ENCODE measurements at regions of chr4 and their contacts with region 1.

Region 1: GRCh38 chr4:38905652-38906385 is 38.2 kb downstream of the FAM114A1 start:
- DNase-seq: no peak
- ATAC-seq: peak; percentile 75

Region 2: DNA sequence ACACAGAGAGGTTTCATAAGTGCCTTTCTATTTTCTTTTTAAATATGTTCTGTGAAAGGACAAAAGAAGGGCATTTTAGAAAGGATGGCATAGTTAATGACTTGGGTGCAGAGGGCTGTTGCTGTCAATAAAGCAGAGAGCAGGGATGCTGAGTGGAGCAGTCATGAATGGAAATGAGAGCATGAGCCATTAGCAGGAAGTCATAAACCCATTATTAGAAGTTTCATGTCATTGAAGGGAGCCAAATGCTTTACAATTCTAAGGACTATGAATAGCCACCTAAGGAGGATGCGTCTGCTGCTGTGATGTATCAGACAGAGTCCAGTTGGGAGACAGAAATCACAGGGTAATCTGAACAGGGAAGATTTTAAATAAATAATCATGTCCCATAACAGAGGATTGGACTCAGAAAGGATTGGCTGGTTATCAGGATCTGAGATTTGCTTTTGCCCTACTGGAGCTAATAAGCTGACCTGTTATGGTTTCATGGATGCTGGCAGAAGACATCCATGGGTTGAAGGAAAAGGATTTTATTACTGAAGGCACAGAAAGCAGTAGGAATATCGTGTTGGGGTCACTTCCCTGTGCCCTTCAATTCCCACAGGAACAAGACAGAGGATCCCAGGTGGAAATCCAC is 229.0 kb after region 1 on chr4:
- intact Hi-C with region 1: loop called (anchors 5 kb)
- DNase-seq: no peak
- ATAC-seq: no peak